CD4-positive, alpha-beta T cell (primary cell): ENCODE measurements at regions of chr5 and their contacts with region 1.

Region 1: GRCh38 chr5:146541958-146542849 is 26.2 kb upstream of the GPR151 start:
- DNase-seq: peak; percentile 43 to 75 (median 56)
- ATAC-seq: peak; percentile 80
- H3K4me3 ChIP-seq: no peak overlapping the region
- H3K4me3 Mint-ChIP-seq: no peak overlapping the region
- H3K27ac ChIP-seq: no peak overlapping the region
- H3K27ac Mint-ChIP-seq: no peak overlapping the region
- H3K4me1 ChIP-seq: no peaks in the 10 kb centered on the region
- H3K4me1 Mint-ChIP-seq: no peaks in the 10 kb centered on the region
- H3K27me3 ChIP-seq: no peaks in the 10 kb centered on the region
- H3K27me3 Mint-ChIP-seq: no peaks in the 10 kb centered on the region
- CTCF ChIP-seq: peak; percentile 84

Region 2: GRCh38 chr5:146560205-146560812 is 18.1 kb after region 1 on chr5:
- CTCF ChIA-PET with region 1: no interaction called
- POLR2A ChIA-PET with region 1: no interaction called
- intact Hi-C with region 1: no loop called
- DNase-seq: no peak
- ATAC-seq: no peak
- H3K4me3 ChIP-seq: no peak overlapping the region
- H3K4me3 Mint-ChIP-seq: no peak overlapping the region
- H3K27ac ChIP-seq: no peak overlapping the region
- H3K27ac Mint-ChIP-seq: no peak overlapping the region
- H3K4me1 ChIP-seq: no peaks in the 10 kb centered on the region
- H3K4me1 Mint-ChIP-seq: no peaks in the 10 kb centered on the region
- H3K27me3 ChIP-seq: peaks cover 0 to 5% of the 10 kb centered on the region in 2 experiments
- H3K27me3 Mint-ChIP-seq: peaks cover 8% of the 10 kb centered on the region
- CTCF ChIP-seq: no peak

Region 3: DNA sequence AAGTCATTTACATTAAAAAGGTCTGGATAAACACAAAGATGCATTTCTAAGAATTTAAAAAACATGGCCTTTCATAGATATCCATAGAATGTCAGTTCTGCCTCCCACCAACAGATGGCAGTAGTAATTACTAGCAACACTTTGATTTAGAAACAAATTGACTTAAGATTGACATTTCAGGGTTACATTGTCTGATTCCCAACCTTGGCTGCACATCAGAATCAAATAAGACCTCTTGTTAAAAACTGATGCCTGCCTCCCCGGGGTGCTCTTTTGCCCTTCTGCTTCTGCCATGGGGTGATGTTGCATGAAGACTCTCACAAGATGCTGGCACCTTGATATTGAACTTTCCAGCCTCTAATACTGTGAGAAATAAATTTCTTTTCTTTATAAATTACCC is 120.0 kb after region 1 on chr5:
- CTCF ChIA-PET with region 1: no interaction called
- POLR2A ChIA-PET with region 1: no interaction called
- intact Hi-C with region 1: loop called in 1 of 2 experiments (anchors 5 kb)
- DNase-seq: peak in 5 of 14 experiments; percentile 2 to 64 (median 61)
- ATAC-seq: no peak
- H3K4me3 ChIP-seq: no peak overlapping the region
- H3K4me3 Mint-ChIP-seq: no peak overlapping the region
- H3K27ac ChIP-seq: no peak overlapping the region
- H3K27ac Mint-ChIP-seq: no peak overlapping the region
- H3K4me1 ChIP-seq: no peaks in the 10 kb centered on the region
- H3K4me1 Mint-ChIP-seq: peaks cover 20% of the 10 kb centered on the region
- H3K27me3 ChIP-seq: no peaks in the 10 kb centered on the region
- H3K27me3 Mint-ChIP-seq: no peaks in the 10 kb centered on the region
- CTCF ChIP-seq: peak; percentile 79